ENCODE measurements at regions of chr2 and their contacts with region 1.

Region 1: DNA sequence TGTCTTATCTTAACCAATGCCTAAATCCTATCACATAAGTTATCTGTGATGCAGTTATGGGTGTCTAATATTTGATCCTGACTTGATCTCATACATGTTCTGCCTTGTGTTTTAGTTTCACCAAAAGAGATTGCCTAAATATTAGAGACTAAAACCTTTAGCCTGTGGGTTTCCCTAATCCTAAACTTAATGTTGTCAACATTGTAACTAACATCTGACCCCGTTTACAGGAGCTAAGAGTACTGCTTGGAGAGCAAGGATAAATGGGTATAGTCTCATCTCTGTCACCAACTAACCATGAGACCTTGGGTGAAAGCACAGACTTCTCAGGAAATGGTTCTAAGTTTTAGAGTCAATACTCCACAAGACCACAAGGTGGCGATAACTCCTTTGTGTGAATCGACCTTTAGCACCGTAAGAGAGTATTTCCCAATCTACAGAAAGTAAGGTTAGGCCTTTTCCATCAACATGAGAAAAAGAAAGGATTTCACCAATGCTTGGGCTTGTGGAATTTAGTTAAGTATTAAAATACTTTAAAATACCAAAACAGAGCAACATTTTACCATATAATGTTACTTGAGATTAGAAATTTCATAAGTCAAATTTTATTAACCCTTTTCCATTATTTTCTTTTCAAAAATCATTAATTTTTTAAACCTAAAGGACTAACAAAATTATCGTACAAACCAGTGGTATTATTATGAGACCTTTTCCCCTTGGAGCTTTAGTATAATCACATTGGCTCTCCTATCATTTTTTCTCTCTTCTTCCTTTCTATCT is 60.5 kb downstream of the G6PC2 start:
- DNase-seq: peak; percentile 72
- H3K4me3 ChIP-seq: no peak overlapping the region
- H3K27ac ChIP-seq: no peak overlapping the region
- H3K4me1 ChIP-seq: peaks cover 8% of the 10 kb centered on the region
- H3K27me3 ChIP-seq: peaks cover 1% of the 10 kb centered on the region
- CTCF ChIP-seq: peak; percentile 77 to 83

Region 2: GRCh38 chr2:168089200-168089599 is 872.4 kb before region 1 on chr2:
- CTCF ChIA-PET with region 1: no interaction called
- dilution Hi-C with region 1: no loop called
- in situ Hi-C with region 1: no loop called
- intact Hi-C with region 1: no loop called
- DNase-seq: no peak
- H3K4me3 ChIP-seq: no peak overlapping the region
- H3K27ac ChIP-seq: no peak overlapping the region
- H3K4me1 ChIP-seq: no peaks in the 10 kb centered on the region
- H3K27me3 ChIP-seq: no peaks in the 10 kb centered on the region
- CTCF ChIP-seq: no peak

Region 3: DNA sequence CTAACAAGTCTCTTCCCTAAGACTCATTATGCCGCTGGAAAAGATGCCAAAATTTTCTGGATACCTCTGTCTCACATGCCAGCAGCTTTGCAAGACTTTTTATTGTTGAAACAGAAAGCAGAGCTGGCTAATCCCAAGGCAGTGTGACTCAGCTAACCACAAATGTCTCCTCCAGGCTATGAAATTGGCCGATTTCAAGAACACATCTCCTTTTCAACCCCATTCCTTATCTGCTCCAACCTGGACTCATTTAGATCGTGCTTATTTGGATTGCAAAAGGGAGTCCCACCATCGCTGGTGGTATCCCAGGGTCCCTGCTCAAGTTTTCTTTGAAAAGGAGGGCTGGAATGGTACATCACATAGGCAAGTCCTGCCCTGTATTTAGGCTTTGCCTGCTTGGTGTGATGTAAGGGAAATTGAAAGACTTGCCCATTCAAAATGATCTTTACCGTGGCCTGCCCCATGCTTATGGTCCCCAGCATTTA is 134.0 kb after region 1 on chr2:
- CTCF ChIA-PET with region 1: no interaction called
- dilution Hi-C with region 1: no loop called
- in situ Hi-C with region 1: no loop called
- intact Hi-C with region 1: loop called (anchors 1 kb)
- DNase-seq: peak; percentile 96
- H3K4me3 ChIP-seq: peak overlapping the region in 1 of 3 experiments; percentile 8
- H3K27ac ChIP-seq: no peak overlapping the region
- H3K4me1 ChIP-seq: peaks cover 37% of the 10 kb centered on the region
- H3K27me3 ChIP-seq: no peaks in the 10 kb centered on the region
- CTCF ChIP-seq: no peak

Region 4: DNA sequence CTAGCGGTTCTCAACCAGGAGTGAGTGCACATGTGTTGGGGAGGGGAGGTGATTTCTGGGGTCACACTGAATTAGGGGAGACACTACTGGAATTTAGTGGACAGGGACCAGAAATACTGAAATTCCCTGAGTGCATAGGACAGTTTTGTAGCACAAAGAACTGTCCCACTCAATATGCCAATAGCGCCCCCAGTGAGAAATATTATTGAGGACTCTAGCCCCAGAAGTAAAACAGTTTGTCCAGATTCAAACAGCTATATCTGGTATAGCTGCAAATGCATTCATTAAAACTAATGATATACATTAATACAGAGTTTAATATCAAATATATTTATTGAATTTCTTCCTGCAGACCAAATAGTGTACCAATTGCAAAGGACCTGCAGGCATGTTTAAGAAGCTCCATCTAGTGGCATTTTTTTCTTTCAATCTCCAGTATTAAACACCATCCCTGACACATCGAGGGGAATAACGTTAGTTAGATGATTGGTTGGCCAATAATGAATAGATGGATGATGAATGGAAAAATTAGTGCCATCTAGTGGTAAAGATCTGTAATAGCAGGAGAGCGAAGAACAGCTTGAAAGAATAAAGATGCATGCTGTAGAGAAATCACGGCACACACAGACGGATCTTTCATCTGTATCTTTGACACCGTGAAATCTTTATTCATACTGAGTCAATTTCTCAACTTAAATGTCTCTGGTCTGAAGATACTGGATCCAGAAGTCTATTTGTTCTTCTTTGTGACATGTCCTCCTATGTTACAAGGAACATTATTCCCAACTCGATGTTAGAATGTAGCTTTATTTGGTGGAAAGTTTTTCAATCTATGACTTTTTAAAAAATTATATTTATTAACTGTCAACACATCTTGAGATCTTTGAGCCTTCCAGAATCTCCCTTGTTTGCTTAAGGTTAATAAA is 170.2 kb after region 1 on chr2:
- CTCF ChIA-PET with region 1: no interaction called
- dilution Hi-C with region 1: no loop called
- in situ Hi-C with region 1: loop called (anchors 10 kb)
- intact Hi-C with region 1: loop called (anchors 1 kb)
- DNase-seq: peak; percentile 80
- H3K4me3 ChIP-seq: no peak overlapping the region
- H3K27ac ChIP-seq: no peak overlapping the region
- H3K4me1 ChIP-seq: no peaks in the 10 kb centered on the region
- H3K27me3 ChIP-seq: no peaks in the 10 kb centered on the region
- CTCF ChIP-seq: peak; percentile 72 to 78

Region 5: DNA sequence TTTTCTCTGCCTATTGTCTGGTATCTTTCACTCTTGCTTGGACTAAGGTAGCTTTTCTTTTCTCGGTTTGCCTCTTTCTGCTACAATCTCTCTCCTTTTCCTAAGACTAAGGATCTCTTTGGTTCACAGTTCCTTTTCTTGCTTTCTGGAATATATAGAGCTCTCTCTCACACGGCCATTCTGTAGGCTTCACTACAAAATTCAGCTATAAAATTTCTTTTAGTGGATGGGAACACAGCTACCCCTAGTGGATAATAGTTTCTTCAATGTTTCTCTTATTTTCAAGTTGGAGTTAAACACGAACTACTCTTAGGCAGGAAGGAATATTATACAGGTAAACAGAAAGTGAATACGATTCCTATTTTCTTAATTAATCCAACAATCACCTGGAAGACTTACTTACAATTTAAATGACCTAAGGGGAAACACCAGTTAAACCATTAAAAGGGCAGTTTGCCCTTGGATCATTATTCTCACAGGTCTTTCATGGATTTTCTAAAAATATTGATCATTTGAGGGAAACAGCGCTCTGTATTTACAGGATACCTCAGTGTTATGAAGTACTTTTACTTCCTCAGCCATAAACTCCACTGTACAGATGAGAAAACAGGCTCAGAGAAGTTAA is 260.2 kb after region 1 on chr2:
- CTCF ChIA-PET with region 1: no interaction called
- dilution Hi-C with region 1: no loop called
- in situ Hi-C with region 1: no loop called
- intact Hi-C with region 1: loop called (anchors 2 kb)
- DNase-seq: peak; percentile 3
- H3K4me3 ChIP-seq: no peak overlapping the region
- H3K27ac ChIP-seq: no peak overlapping the region
- H3K4me1 ChIP-seq: no peaks in the 10 kb centered on the region
- H3K27me3 ChIP-seq: no peaks in the 10 kb centered on the region
- CTCF ChIP-seq: peak; percentile 46 to 51

Region 6: GRCh38 chr2:169397697-169398096 is 436.1 kb after region 1 on chr2:
- CTCF ChIA-PET with region 1: no interaction called
- dilution Hi-C with region 1: no loop called
- in situ Hi-C with region 1: loop called in 1 of 2 experiments (anchors 25 kb)
- intact Hi-C with region 1: loop called (anchors 1 kb)
- DNase-seq: no peak
- H3K4me3 ChIP-seq: no peak overlapping the region
- H3K27ac ChIP-seq: no peak overlapping the region
- H3K4me1 ChIP-seq: peaks cover 7% of the 10 kb centered on the region
- H3K27me3 ChIP-seq: no peaks in the 10 kb centered on the region
- CTCF ChIP-seq: peak; percentile 29 to 50

Measured in mammary epithelial cell (primary cell).